HepG2 (cell line): ENCODE measurements at regions of chr13 and their contacts with region 1.

Region 1: DNA sequence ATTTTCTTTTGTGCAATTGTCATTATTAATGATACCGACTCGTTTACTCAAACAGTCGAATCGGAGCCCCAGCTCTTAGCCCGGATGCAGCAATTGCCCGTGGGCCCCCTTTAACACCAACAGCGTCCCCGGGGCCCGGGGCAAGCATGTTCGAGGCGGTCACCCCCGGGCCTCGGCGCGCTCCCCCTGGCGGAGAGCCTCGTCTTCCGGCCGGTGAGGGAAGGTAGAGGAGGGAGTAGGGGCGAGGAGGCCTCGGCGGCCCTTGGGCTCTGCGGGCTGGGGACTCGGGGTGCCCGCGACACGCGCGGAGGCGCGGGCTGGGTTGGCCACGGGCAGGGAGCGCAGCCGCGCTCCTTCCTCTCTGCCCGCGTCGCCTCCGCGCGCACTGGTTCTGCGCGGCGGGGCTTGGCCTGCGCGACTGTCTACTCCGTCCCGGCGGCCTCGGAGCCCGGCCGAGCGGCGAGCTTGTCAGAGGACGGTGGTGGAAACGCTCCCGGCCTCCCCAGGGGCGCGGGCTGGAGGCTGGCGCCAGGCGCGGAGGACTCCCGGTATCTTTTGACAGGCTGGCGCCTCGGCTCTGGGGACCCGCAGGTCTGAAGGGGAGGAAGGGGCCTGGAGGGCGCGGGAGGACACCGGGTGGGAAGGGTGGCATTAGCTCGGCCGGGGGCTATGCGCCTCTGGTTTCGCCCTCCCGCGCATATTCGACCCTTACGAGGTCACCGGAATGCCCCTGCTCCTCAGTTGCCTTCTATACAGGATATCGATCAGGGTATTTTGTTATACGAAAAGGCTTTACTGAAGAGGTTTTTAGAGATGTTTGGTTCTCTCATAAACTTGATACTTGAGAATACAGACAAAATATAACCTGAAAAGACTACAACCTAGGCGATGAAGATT is 1.5 kb downstream of the BIVM start:
- DNase-seq: peak; percentile 66
- ATAC-seq: peak; percentile 88
- H3K4me3 ChIP-seq: peak overlapping the region; percentile 70 to 89 (median 83)
- H3K27ac ChIP-seq: peak overlapping the region; percentile 78
- H3K4me1 ChIP-seq: peaks cover 24% of the 10 kb centered on the region
- H3K27me3 ChIP-seq: no peaks in the 10 kb centered on the region; a peak in 1 of 5 replicates
- CTCF ChIP-seq: peak; percentile 89
- EP300 ChIP-seq: no peak
- POLR2A ChIP-seq: peak; percentile 37 to 67; a peak in 2 of 4 replicates
- RAD21 ChIP-seq: peak; percentile 70

Region 2: GRCh38 chr13:101331731-101332130 is 1468.7 kb before region 1 on chr13:
- CTCF ChIA-PET with region 1: no interaction called
- POLR2A ChIA-PET with region 1: no interaction called
- in situ Hi-C with region 1: no loop called
- intact Hi-C with region 1: no loop called
- DNase-seq: no peak
- ATAC-seq: no peak
- H3K4me3 ChIP-seq: no peak overlapping the region
- H3K27ac ChIP-seq: no peak overlapping the region
- H3K4me1 ChIP-seq: no peaks in the 10 kb centered on the region
- H3K27me3 ChIP-seq: no peaks in the 10 kb centered on the region
- CTCF ChIP-seq: no peak
- EP300 ChIP-seq: no peak
- POLR2A ChIP-seq: no peak
- RAD21 ChIP-seq: no peak

Region 3: GRCh38 chr13:102460801-102461200 is 339.6 kb before region 1 on chr13:
- CTCF ChIA-PET with region 1: no interaction called
- POLR2A ChIA-PET with region 1: no interaction called
- in situ Hi-C with region 1: no loop called
- intact Hi-C with region 1: no loop called
- DNase-seq: no peak
- ATAC-seq: no peak
- H3K4me3 ChIP-seq: no peak overlapping the region
- H3K27ac ChIP-seq: no peak overlapping the region
- H3K4me1 ChIP-seq: 0 out of 2 replicates have a peak, but pooled peaks cover 6% of the 10 kb centered on the region
- H3K27me3 ChIP-seq: peaks cover 0 to 4% of the 10 kb centered on the region in 2 experiments; a peak in 1 of 5 replicates
- CTCF ChIP-seq: no peak
- EP300 ChIP-seq: no peak
- POLR2A ChIP-seq: no peak
- RAD21 ChIP-seq: no peak

Region 4: GRCh38 chr13:102580552-102581169 is 219.7 kb before region 1 on chr13:
- CTCF ChIA-PET with region 1: interaction called, 9 read pairs
- POLR2A ChIA-PET with region 1: no interaction called
- in situ Hi-C with region 1: no loop called
- intact Hi-C with region 1: loop called (anchors 1 kb)
- DNase-seq: peak; percentile 55
- ATAC-seq: peak; percentile 87
- H3K4me3 ChIP-seq: no peak overlapping the region
- H3K27ac ChIP-seq: no peak overlapping the region
- H3K4me1 ChIP-seq: no peaks in the 10 kb centered on the region
- H3K27me3 ChIP-seq: peaks cover 0 to 14% of the 10 kb centered on the region in 2 experiments; a peak in 4 of 5 replicates
- CTCF ChIP-seq: peak; percentile 78
- EP300 ChIP-seq: no peak
- POLR2A ChIP-seq: no peak
- RAD21 ChIP-seq: peak; percentile 55

Region 5: DNA sequence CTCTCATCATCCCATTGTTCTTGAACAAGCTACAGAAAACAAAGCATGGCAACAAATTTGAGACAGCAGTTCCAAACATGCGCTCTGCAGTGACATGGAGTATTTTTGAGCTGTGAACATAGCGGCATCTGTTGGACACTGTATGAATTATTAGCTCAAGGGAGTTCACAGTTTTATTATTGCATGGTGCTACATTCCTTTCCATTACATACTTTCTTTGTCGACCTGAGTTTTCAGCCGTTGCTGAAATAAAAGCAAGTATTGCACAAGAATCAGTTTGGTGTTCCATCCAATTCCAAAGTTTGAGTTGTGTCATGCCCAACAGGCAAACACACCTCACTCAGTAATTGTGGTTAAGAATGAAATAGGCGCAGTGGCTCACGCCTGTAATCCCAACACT is 75.5 kb before region 1 on chr13:
- CTCF ChIA-PET with region 1: interaction called, 6 read pairs
- POLR2A ChIA-PET with region 1: no interaction called
- in situ Hi-C with region 1: no loop called
- intact Hi-C with region 1: loop called (anchors 1 kb)
- DNase-seq: peak; percentile 82
- ATAC-seq: peak; percentile 97
- H3K4me3 ChIP-seq: no peak overlapping the region
- H3K27ac ChIP-seq: no peak overlapping the region
- H3K4me1 ChIP-seq: peaks cover 9% of the 10 kb centered on the region; the same call in 1 of the 2 replicates
- H3K27me3 ChIP-seq: no peaks in the 10 kb centered on the region
- CTCF ChIP-seq: peak; percentile 81
- EP300 ChIP-seq: peak in 1 of 2 experiments; percentile 20; a peak in 1 of 4 replicates
- POLR2A ChIP-seq: no peak
- RAD21 ChIP-seq: 0 out of 2 replicates have a peak, but pooled peaks have one; percentile 32

Region 6: DNA sequence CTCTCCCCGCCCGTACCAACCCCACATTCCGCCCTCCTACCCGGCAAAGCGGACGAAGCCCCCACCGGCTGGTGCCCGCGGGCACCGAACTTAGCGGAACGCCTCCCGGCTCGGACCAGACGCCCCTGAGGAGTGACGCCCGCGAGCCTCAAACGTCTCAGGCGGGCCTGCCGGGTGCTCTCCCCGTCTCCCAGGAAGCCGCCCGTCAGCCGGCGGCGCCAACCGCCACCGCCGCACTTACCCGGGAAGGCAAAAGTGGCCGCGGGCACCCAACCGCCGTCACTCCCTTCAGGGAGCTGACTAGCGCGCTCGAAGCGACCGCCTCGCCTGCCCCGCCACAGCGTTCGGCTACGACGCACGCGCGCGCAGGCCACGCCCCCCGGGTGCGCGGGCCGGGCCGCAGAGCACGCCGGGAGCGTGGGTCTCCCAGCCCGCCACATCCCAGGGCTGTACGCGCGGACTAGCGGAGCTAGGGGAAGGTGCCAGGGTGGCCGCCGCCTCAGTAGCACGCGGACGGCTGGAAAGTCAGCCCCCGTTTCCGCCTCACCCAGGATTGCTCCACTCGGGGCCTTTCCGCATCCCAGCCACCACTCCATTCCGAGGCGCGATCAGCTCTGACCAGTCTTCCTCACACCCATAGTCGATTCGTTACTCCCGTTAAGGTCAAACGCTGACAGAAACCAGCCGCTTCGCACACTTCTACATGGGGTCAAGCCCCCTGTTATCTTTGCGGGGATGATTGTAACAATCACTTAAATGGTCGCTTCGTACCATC is 26.8 kb before region 1 on chr13 and contains the start of gene TEX30:
- CTCF ChIA-PET with region 1: no interaction called
- POLR2A ChIA-PET with region 1: interaction called, 8 read pairs
- in situ Hi-C with region 1: no loop called
- intact Hi-C with region 1: loop called (anchors 1 kb)
- DNase-seq: no peak
- ATAC-seq: no peak
- H3K4me3 ChIP-seq: peak within 1 kb of the TSS; percentile 45 to 65 (median 48); a peak in 5 of 6 replicates
- H3K27ac ChIP-seq: no peak within 1 kb of the TSS
- H3K4me1 ChIP-seq: peaks cover 32% of the 10 kb centered on the region
- H3K27me3 ChIP-seq: no peaks in the 10 kb centered on the region; a peak in 1 of 5 replicates
- CTCF ChIP-seq: no peak
- EP300 ChIP-seq: no peak
- POLR2A ChIP-seq: no peak
- RAD21 ChIP-seq: no peak
- total RNA-seq, gene TEX30: 0.60 and 1.2 TPM in 2 replicates

Region 7: GRCh38 chr13:102830646-102831045 is 30.3 kb after region 1 on chr13:
- CTCF ChIA-PET with region 1: no interaction called
- POLR2A ChIA-PET with region 1: interaction called, 4 read pairs
- in situ Hi-C with region 1: no loop called
- intact Hi-C with region 1: loop called (anchors 1 kb)
- DNase-seq: peak; percentile 73
- ATAC-seq: peak; percentile 100
- H3K4me3 ChIP-seq: peak overlapping the region in 2 of 3 experiments; percentile 20 to 53; a peak in 3 of 6 replicates
- H3K27ac ChIP-seq: peak overlapping the region; percentile 77
- H3K4me1 ChIP-seq: peaks cover 16% of the 10 kb centered on the region
- H3K27me3 ChIP-seq: no peaks in the 10 kb centered on the region
- CTCF ChIP-seq: no peak
- EP300 ChIP-seq: peak in 1 of 2 experiments; percentile 58; a peak in 2 of 4 replicates
- POLR2A ChIP-seq: peak; percentile 42 to 64; a peak in 2 of 4 replicates
- RAD21 ChIP-seq: 0 out of 2 replicates have a peak, but pooled peaks have one; percentile 20